Activated CD8-positive, alpha-beta T cell treated with anti-CD3 and anti-CD28 coated beads, Interleukin-2, amount 10 ng/mL, durations not matched to agents 7 days and 5 days (primary cell): ENCODE measurements at regions of chr5 and their contacts with region 1.

Region 1: GRCh38 chr5:171418316-171418981 is 998 bp upstream of the FGF18 start:
- DNase-seq: peak; percentile 72
- ATAC-seq: peak; percentile 63
- H3K4me3 Mint-ChIP-seq: peak overlapping the region; percentile 63
- H3K27ac Mint-ChIP-seq: no peak overlapping the region
- H3K4me1 Mint-ChIP-seq: peaks cover 17% of the 10 kb centered on the region
- H3K27me3 Mint-ChIP-seq: peaks cover 24% of the 10 kb centered on the region

Region 2: DNA sequence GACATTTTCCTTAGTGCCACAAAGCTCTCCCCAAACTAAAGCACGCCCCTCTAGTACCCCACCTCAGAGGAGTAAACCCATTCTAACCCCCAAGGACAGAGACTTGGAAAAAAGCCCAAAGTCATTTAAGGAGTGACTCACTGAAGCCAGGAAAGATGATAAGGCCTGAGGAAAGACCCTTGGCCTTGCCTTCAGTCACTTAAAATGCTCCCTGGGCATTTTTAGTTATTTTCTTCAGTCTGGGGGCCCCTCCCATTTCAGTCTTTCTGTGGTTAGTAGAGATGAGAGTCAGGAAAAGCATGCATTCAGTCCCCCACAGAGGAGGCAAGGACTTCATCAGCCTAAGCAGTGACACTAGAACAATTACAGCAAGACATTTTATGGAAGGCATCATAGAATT is 123.2 kb before region 1 on chr5:
- CTCF ChIA-PET with region 1: no interaction called
- POLR2A ChIA-PET with region 1: no interaction called
- DNase-seq: no peak
- ATAC-seq: no peak
- H3K4me3 Mint-ChIP-seq: no peak overlapping the region
- H3K27ac Mint-ChIP-seq: no peak overlapping the region
- H3K4me1 Mint-ChIP-seq: no peaks in the 10 kb centered on the region
- H3K27me3 Mint-ChIP-seq: peaks cover 27% of the 10 kb centered on the region

Region 3: GRCh38 chr5:171863930-171864329 is 445.5 kb after region 1 on chr5:
- CTCF ChIA-PET with region 1: no interaction called
- POLR2A ChIA-PET with region 1: no interaction called
- DNase-seq: no peak
- ATAC-seq: no peak
- H3K4me3 Mint-ChIP-seq: no peak overlapping the region
- H3K27ac Mint-ChIP-seq: no peak overlapping the region
- H3K4me1 Mint-ChIP-seq: peaks cover 14% of the 10 kb centered on the region
- H3K27me3 Mint-ChIP-seq: no peaks in the 10 kb centered on the region

Region 4: DNA sequence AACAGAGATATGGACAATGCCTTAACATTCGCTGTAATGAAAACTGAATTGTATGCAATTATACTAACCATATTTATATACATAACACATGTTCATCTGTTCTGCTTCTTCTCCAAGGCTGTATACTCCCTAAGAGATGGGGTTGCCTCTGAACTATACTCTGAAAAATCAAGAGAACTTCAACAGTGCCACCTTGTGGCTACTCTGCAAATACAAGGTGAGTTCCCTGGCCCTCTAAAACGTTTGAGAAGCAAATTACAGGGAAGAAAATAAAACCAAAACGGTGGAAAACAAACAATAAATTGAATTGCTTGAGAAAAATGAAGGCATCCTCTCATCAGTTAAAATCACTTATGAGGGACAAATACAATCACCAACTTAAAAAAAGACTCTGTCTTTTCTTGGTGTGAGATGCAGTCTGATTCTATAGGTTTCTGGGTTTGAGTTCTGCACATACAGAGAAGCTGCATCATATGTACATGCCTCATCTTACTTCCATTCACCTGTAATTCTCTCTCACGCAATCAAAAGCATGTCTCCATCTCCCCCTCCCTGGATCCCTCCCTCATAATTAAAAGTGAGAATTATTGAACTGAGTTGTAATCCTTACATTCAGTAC is 489.4 kb after region 1 on chr5:
- CTCF ChIA-PET with region 1: interaction called, 30 read pairs
- POLR2A ChIA-PET with region 1: no interaction called
- DNase-seq: peak; percentile 72
- ATAC-seq: peak; percentile 84
- H3K4me3 Mint-ChIP-seq: no peak overlapping the region
- H3K27ac Mint-ChIP-seq: no peak overlapping the region
- H3K4me1 Mint-ChIP-seq: peaks cover 28% of the 10 kb centered on the region
- H3K27me3 Mint-ChIP-seq: no peaks in the 10 kb centered on the region